ACHN (cell line): ENCODE measurements at regions of chr2 and their contacts with region 1.

Region 1: DNA sequence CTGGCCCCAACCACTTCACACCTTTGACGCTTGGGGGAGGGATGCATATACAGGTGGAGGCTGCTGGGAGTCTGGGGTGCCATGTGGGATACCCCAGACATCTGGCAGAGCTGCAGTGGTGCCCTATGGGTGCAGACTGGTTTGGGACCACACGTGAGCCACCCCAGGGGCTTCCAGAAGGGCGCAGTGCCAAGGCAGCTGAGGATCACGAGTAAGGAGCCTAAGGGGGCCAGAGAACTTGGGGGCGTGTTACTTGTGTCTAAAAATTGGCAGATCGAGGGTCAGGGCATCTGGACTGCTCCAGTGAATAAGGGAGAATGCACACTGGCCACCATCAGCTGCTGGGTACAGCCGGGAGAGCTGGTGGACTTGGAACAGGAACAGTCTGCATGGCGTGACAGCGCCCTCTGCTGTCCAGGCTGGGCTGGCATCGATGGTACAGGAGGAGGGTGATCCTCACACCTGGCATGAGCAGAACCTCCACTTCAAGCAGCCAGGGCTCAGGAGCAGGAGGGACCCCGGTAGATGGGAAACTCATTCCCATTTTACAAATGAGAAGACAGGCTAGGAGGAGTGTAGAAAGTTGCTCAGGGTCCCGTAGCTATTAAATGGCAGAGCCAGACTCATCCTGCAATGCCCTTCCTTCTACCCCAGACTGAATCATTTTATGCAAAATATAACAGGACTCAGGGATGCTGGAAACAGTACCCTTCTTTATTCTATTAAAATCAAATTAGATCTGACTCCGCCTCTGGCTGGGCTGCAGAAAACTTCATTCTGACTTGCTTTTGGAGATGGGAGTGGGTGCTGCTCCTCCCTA is 60.4 kb downstream of the ATOH8 start:
- DNase-seq: peak; percentile 87

Region 2: DNA sequence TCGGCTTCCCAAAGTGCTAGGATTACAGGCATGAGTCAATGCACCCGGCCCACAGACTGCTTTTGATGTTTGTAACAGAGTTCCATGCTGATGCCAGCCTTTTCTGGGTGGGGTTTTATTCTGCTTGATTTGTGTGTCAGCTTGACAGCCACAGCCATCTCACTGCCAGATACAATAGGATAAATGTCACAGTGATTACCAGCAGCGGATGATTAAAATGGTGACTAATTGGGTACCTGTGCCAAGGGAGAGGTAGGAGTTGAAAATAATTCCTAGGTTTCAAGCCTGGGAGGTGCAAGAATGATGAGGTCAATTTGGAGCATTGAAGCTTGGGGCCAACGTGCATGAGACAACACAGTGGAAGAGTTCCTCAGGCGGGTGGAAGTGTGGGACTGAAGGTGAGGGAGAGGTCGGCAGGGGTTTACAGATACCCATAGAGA is 356.3 kb before region 1 on chr2:
- in situ Hi-C with region 1: no loop called
- DNase-seq: no peak

Region 3: GRCh38 chr2:85707304-85707703 is 106.9 kb before region 1 on chr2:
- in situ Hi-C with region 1: loop called (anchors 25 kb)
- DNase-seq: peak; percentile 87

Region 4: GRCh38 chr2:85888684-85889626 is 74.8 kb after region 1 on chr2 and contains the start of gene ST3GAL5:
- in situ Hi-C with region 1: no loop called
- DNase-seq: peak; percentile 84